ENCODE measurements at regions of chr12 and their contacts with region 1.

Region 1: DNA sequence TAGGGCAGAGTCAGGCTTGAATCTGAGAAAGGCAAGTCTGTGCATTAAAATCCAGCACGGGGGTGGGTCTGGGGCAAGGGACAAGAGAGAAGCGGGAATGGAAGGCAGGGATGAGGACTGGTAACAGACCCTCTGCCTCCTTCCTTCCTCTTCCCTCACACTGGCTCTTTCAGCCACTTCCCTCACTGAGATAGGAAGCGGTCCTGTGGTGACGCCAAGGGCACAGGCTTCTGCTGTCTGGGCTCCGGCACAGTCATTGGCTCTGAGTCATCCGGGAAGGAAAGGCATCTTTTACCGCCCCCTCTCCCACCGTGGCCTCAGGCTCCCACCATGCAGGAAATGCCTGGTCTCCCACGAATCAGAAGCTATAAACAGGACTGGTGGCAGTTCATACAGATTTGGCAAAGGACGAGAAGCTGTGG is 70.2 kb downstream of the ETV6 start:
- DNase-seq: no peak
- ATAC-seq: peak; percentile 12
- H3K4me3 ChIP-seq: no peak overlapping the region
- H3K27ac ChIP-seq: peak overlapping the region; percentile 83
- H3K4me1 ChIP-seq: peaks cover 78% of the 10 kb centered on the region
- H3K27me3 ChIP-seq: no peaks in the 10 kb centered on the region
- CTCF ChIP-seq: no peak
- EP300 ChIP-seq: no peak
- POLR2A ChIP-seq: peak; percentile 53; the same call in 1 of the 2 replicates
- RAD21 ChIP-seq: no peak

Region 2: DNA sequence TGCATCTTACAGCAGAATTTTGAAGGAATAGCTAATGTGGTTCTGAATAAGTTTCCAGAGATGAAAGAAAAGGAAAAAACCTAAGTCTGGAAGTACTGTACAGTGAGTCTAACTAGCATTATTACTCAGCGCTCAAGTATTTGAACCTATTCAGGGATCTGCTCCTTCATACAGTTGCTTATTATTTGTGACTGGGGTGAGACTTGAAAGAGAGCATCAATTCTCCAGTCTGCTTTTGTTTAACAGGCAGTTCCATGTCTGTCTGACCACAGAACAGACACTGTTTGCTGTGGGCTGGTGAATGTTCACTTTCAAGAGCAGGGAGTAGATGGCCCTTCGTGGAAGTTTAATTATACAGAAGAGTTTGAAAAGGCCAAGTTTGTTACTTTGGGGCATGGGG is 60.9 kb before region 1 on chr12:
- CTCF ChIA-PET with region 1: interaction called, 3 read pairs
- POLR2A ChIA-PET with region 1: interaction called, 8 read pairs
- RAD21 ChIA-PET with region 1: interaction called, 24 read pairs
- SMC1A ChIA-PET with region 1: interaction called, 19 read pairs
- in situ Hi-C with region 1: no loop called
- intact Hi-C with region 1: no loop called
- DNase-seq: no peak
- ATAC-seq: no peak
- H3K4me3 ChIP-seq: no peak overlapping the region
- H3K27ac ChIP-seq: no peak overlapping the region
- H3K4me1 ChIP-seq: peaks cover 23% of the 10 kb centered on the region
- H3K27me3 ChIP-seq: no peaks in the 10 kb centered on the region
- CTCF ChIP-seq: no peak
- EP300 ChIP-seq: no peak
- POLR2A ChIP-seq: no peak
- RAD21 ChIP-seq: no peak

Region 3: DNA sequence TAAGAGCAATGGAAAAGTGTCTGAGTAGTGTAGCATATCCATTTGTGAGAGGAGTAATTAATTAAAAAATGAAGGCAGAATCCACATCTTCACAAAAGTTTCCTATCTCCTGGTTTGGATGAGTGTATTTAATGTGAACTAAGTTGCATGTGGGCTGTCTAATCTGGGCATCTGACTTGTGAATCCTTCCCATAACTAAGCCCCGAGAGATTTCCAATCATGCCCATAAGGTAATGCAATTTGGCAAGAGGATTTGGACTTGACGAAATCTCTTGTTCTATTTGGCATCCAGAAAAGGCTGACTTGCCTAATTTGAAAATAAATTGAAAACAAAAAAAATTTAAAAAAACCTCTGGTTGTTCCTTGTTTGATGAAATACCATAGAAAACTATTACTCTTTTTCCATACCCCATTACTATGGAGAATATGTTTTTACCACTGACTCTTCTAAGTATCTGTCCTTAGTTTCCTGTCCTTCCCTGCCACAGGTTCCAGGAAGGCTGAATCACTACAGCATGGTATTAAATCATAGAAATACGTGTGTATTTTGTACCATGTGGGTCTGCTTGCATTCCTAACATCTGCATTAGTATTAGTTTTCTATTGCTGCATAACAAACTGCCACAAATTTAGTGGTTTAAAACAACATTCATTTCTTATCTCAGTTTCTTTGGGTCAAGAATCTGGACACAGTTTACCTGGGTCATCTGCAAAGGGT is 21.9 kb before region 1 on chr12:
- CTCF ChIA-PET with region 1: interaction called, 4 read pairs
- POLR2A ChIA-PET with region 1: interaction called, 6 read pairs
- RAD21 ChIA-PET with region 1: no interaction called
- SMC1A ChIA-PET with region 1: interaction called, 35 read pairs
- in situ Hi-C with region 1: no loop called
- intact Hi-C with region 1: no loop called
- DNase-seq: no peak
- ATAC-seq: no peak
- H3K4me3 ChIP-seq: no peak overlapping the region
- H3K27ac ChIP-seq: no peak overlapping the region
- H3K4me1 ChIP-seq: peaks cover 12% of the 10 kb centered on the region
- H3K27me3 ChIP-seq: no peaks in the 10 kb centered on the region
- CTCF ChIP-seq: no peak
- EP300 ChIP-seq: no peak
- POLR2A ChIP-seq: no peak
- RAD21 ChIP-seq: no peak

Region 4: GRCh38 chr12:11705010-11705409 is 14.7 kb before region 1 on chr12:
- CTCF ChIA-PET with region 1: interaction called, 4 read pairs
- POLR2A ChIA-PET with region 1: interaction called, 15 read pairs
- RAD21 ChIA-PET with region 1: interaction called, 3 read pairs
- SMC1A ChIA-PET with region 1: interaction called, 35 read pairs
- in situ Hi-C with region 1: no loop called
- intact Hi-C with region 1: no loop called
- DNase-seq: no peak
- ATAC-seq: no peak
- H3K4me3 ChIP-seq: no peak overlapping the region
- H3K27ac ChIP-seq: no peak overlapping the region
- H3K4me1 ChIP-seq: peaks cover 18% of the 10 kb centered on the region
- H3K27me3 ChIP-seq: no peaks in the 10 kb centered on the region
- CTCF ChIP-seq: no peak
- EP300 ChIP-seq: no peak
- POLR2A ChIP-seq: no peak
- RAD21 ChIP-seq: no peak

Region 5: GRCh38 chr12:11765817-11766794 is 46.4 kb after region 1 on chr12:
- CTCF ChIA-PET with region 1: no interaction called
- POLR2A ChIA-PET with region 1: interaction called, 5 read pairs
- RAD21 ChIA-PET with region 1: interaction called, 497 read pairs
- SMC1A ChIA-PET with region 1: interaction called, 270 read pairs
- in situ Hi-C with region 1: no loop called
- intact Hi-C with region 1: no loop called
- DNase-seq: peak; percentile 92
- ATAC-seq: peak; percentile 75
- H3K4me3 ChIP-seq: peak overlapping the region; percentile 11; the same call in 1 of the 2 replicates
- H3K27ac ChIP-seq: peak overlapping the region; percentile 100
- H3K4me1 ChIP-seq: peaks cover 92% of the 10 kb centered on the region
- H3K27me3 ChIP-seq: no peaks in the 10 kb centered on the region
- CTCF ChIP-seq: no peak
- EP300 ChIP-seq: peak; percentile 81 to 89
- POLR2A ChIP-seq: 0 out of 2 replicates have a peak, but pooled peaks have one; percentile 32
- RAD21 ChIP-seq: peak; percentile 19; the same call in 1 of the 2 replicates